Endothelial cell of umbilical vein (primary cell): ENCODE measurements at regions of chr15 and their contacts with region 1.

Region 1: GRCh38 chr15:99704444-99704838 is 28.8 kb downstream of the LYSMD4 start:
- DNase-seq: peak; percentile 92
- H3K4me3 ChIP-seq: no peak overlapping the region
- H3K27ac ChIP-seq: peak overlapping the region; percentile 75
- H3K4me1 ChIP-seq: peaks cover 46% of the 10 kb centered on the region
- H3K27me3 ChIP-seq: no peaks in the 10 kb centered on the region
- CTCF ChIP-seq: peak; percentile 50 to 61
- POLR2A ChIP-seq: no peak

Region 2: DNA sequence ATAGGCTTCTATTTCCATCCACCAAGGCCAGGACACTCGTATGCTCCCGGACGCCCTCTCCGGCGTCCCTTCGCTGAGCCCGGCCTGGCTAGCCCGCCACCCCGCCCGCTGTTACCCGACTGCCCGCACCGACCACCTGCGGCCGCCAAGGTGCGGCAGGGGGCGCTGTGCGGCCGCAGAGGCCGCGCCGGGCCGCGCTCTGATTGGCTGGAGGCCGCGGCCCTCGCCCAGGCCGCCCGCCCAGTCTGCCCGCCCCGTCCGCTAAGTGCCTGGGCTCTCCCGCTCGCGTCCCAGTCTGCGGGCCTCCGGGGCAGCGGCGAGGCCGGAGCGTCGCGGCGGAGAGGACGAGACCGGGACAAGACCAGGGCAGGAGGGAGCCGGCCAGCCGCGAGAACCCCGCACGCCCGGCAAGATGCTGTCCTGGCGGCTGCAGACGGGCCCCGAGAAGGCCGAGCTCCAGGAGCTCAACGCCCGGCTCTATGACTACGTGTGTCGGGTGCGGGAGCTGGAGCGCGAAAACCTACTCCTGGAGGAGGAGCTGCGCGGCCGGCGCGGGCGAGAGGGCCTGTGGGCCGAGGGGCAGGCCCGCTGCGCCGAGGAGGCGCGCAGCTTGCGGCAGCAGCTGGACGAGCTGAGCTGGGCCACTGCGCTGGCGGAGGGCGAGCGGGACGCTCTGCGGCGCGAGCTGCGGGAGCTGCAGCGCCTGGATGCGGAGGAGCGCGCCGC is 599.5 kb before region 1 on chr15 and contains the start of gene SYNM:
- CTCF ChIA-PET with region 1: interaction called, 9 read pairs
- POLR2A ChIA-PET with region 1: no interaction called
- dilution Hi-C with region 1: no loop called
- intact Hi-C with region 1: loop called (anchors 5 kb)
- DNase-seq: peak; percentile 83
- H3K4me3 ChIP-seq: peak within 1 kb of the TSS; percentile 38 to 44 (median 42)
- H3K27ac ChIP-seq: no peak within 1 kb of the TSS
- H3K4me1 ChIP-seq: peaks cover 7% of the 10 kb centered on the region
- H3K27me3 ChIP-seq: peaks cover 3% of the 10 kb centered on the region in 2 experiments
- CTCF ChIP-seq: peak; percentile 68 to 93
- POLR2A ChIP-seq: peak; percentile 77
- total RNA-seq, gene SYNM: 10.2 and 20.4 TPM in 2 replicates

Region 3: GRCh38 chr15:99303907-99304306 is 400.5 kb before region 1 on chr15:
- CTCF ChIA-PET with region 1: interaction called, 10 read pairs
- POLR2A ChIA-PET with region 1: no interaction called
- dilution Hi-C with region 1: loop called (anchors 25 kb)
- intact Hi-C with region 1: no loop called
- DNase-seq: no peak
- H3K4me3 ChIP-seq: no peak overlapping the region
- H3K27ac ChIP-seq: no peak overlapping the region
- H3K4me1 ChIP-seq: peaks cover 6% of the 10 kb centered on the region
- H3K27me3 ChIP-seq: no peaks in the 10 kb centered on the region
- CTCF ChIP-seq: no peak
- POLR2A ChIP-seq: no peak

Region 4: DNA sequence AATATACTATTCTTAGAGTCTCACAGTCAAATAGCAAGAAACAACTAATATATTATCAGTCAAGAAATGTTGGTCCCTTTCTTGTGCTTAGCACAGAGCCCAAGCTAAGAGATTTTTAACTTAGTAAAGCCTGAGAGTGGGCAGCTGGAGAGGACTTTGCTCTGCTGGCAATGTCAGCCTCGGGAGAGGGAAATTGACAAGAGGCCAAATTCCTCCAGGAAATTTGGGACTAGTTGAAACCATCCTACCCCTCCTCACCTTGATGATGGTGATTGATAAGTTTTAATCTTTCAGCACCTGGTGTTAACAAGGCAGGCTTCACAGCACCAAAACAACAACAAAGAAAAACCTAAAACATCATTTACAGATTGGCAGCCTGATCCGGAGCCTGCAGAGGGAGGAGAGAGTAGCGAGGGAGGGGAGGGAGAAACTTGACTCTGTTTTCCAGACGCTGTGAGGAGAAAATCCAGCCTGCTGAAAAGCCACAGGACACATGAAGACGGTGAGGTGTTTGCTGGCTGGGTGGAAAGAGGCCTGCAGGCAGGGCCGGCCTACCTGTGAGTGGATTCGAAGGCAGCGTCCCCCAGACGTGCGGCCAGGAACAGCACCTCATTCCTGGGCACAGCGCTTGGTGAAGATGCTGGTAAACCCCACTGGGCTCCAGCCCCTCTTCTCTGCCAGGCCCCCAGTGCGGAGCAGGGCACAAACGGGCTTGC is 302.3 kb before region 1 on chr15:
- CTCF ChIA-PET with region 1: interaction called, 121 read pairs
- POLR2A ChIA-PET with region 1: no interaction called
- dilution Hi-C with region 1: no loop called
- intact Hi-C with region 1: no loop called
- DNase-seq: no peak
- H3K4me3 ChIP-seq: no peak overlapping the region
- H3K27ac ChIP-seq: no peak overlapping the region
- H3K4me1 ChIP-seq: no peaks in the 10 kb centered on the region
- H3K27me3 ChIP-seq: no peaks in the 10 kb centered on the region
- CTCF ChIP-seq: no peak
- POLR2A ChIP-seq: no peak

Region 5: GRCh38 chr15:99476413-99477222 is 227.8 kb before region 1 on chr15:
- CTCF ChIA-PET with region 1: interaction called, 14 read pairs
- POLR2A ChIA-PET with region 1: no interaction called
- dilution Hi-C with region 1: no loop called
- intact Hi-C with region 1: no loop called
- DNase-seq: peak; percentile 84
- H3K4me3 ChIP-seq: no peak overlapping the region
- H3K27ac ChIP-seq: peak overlapping the region; percentile 36
- H3K4me1 ChIP-seq: peaks cover 17% of the 10 kb centered on the region
- H3K27me3 ChIP-seq: no peaks in the 10 kb centered on the region
- CTCF ChIP-seq: no peak
- POLR2A ChIP-seq: no peak

Region 6: GRCh38 chr15:99657996-99658395 is 46.4 kb before region 1 on chr15:
- CTCF ChIA-PET with region 1: interaction called, 10 read pairs
- POLR2A ChIA-PET with region 1: no interaction called
- dilution Hi-C with region 1: no loop called
- intact Hi-C with region 1: no loop called
- DNase-seq: peak; percentile 7
- H3K4me3 ChIP-seq: no peak overlapping the region
- H3K27ac ChIP-seq: no peak overlapping the region
- H3K4me1 ChIP-seq: no peaks in the 10 kb centered on the region
- H3K27me3 ChIP-seq: no peaks in the 10 kb centered on the region
- CTCF ChIP-seq: no peak
- POLR2A ChIP-seq: no peak

Region 7: DNA sequence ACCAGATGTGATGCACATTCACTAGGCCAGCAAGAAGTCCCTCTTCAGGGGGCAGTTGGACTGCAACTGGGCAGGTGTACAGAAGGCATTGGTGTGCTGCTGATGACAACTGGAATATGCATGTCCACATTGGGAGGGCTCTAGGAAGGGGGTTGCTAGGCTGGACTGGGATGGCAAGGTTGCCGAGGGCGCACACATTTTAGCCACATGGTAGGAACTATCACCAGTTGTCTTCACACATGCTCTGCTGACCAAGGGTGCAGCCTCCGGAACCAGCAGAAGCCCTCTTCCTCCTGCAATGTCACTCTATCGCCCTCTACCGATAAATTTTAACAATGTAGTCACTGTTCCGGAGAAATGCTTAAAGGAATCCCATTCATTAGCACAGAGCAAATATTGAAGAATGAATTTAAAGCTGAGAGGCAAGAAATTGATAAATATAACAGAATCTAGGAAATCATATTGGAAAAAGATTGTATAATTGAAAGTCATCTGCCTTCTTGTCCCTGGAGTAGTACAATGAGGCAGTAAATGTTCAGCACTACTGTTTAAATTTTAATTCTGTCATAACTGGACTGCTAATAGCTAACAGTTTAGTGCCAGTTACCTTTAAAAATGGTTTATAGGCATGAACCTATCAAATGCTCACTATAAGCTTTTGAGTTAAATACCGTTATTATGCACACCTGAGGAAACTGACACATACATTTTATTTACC is 51.4 kb after region 1 on chr15:
- CTCF ChIA-PET with region 1: interaction called, 75 read pairs
- POLR2A ChIA-PET with region 1: no interaction called
- dilution Hi-C with region 1: no loop called
- intact Hi-C with region 1: loop called (anchors 1 kb)
- DNase-seq: peak; percentile 73
- H3K4me3 ChIP-seq: no peak overlapping the region
- H3K27ac ChIP-seq: no peak overlapping the region
- H3K4me1 ChIP-seq: no peaks in the 10 kb centered on the region
- H3K27me3 ChIP-seq: no peaks in the 10 kb centered on the region
- CTCF ChIP-seq: peak; percentile 67 to 68
- POLR2A ChIP-seq: no peak